Activated CD4-positive, alpha-beta memory T cell treated with anti-CD3 and anti-CD28 coated beads, Interleukin-2, amount 10 ng/mL, durations not matched to agents 7 days and 5 days (primary cell): ENCODE measurements at regions of chr17 and their contacts with region 1.

Region 1: GRCh38 chr17:78716814-78717393 is 65.2 kb downstream of the CYTH1 start:
- DNase-seq: no peak
- H3K4me3 Mint-ChIP-seq: peak overlapping the region; percentile 9
- H3K27ac Mint-ChIP-seq: no peak overlapping the region
- H3K4me1 Mint-ChIP-seq: peaks cover 88% of the 10 kb centered on the region
- H3K27me3 Mint-ChIP-seq: no peaks in the 10 kb centered on the region

Region 2: DNA sequence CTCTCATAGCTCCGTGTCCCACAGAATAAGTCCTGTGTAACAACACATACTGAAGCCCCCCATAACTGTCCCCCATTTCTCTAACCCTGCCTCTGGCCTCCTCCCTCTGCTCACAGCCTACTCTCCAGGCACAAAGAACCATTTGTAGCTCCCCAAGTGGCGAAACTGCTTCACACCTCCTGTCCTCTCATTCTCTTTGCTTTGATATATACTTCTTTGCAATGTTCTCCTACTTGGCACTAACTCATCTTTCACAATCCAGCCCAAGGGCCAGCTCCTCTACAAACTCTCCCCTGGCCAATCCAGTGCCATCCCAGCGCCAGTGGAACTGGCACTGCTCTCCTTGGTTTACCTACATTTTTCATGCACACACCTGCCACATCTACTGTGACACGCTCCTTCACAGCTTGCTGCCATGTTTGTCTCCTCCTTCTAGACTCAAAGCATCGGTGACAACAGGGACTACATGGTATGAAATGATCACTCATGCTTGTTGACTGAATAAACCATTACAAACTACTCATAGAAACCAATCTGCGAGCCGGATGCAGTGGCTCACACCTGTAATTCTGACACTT is 52.4 kb after region 1 on chr17:
- CTCF ChIA-PET with region 1: interaction called, 3 read pairs
- POLR2A ChIA-PET with region 1: interaction called, 10 read pairs
- DNase-seq: no peak
- H3K4me3 Mint-ChIP-seq: no peak overlapping the region
- H3K27ac Mint-ChIP-seq: no peak overlapping the region
- H3K4me1 Mint-ChIP-seq: peaks cover 48% of the 10 kb centered on the region
- H3K27me3 Mint-ChIP-seq: no peaks in the 10 kb centered on the region